GM10248 (cell line): ENCODE measurements at regions of chr11 and their contacts with region 1.

Region 1: GRCh38 chr11:123707606-123708205 is 33.8 kb downstream of the ZNF202 start:
- DNase-seq: peak; percentile 57
- CTCF ChIP-seq: peak; percentile 81

Region 2: GRCh38 chr11:123580557-123581275 is 127.0 kb before region 1 on chr11:
- CTCF ChIA-PET with region 1: interaction called, 56 read pairs
- POLR2A ChIA-PET with region 1: no interaction called
- DNase-seq: peak; percentile 88
- CTCF ChIP-seq: peak; percentile 97

Region 3: GRCh38 chr11:123640677-123641494 is 66.8 kb before region 1 on chr11:
- CTCF ChIA-PET with region 1: interaction called, 250 read pairs
- POLR2A ChIA-PET with region 1: no interaction called
- DNase-seq: peak; percentile 71
- CTCF ChIP-seq: peak; percentile 79

Region 4: DNA sequence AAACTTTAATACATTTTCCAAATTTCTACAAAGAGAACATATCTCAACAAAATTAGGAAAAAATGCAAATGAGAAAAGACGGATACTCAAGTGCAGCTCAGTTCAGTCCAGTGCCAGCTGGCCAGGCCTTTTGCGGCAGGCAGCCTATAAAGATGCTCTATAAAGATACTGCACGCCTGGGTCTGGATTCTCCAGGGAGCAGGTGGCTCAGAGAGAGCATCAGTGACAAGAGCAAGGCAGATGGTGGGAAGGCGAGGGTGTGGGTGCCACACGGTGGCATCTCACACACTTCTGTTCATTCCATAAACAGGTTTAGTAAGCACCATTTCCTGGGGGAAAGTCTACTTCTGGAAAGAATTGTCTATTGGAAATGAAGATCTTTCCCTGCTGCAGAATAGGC is 35.1 kb before region 1 on chr11:
- CTCF ChIA-PET with region 1: interaction called, 10 read pairs
- POLR2A ChIA-PET with region 1: no interaction called
- DNase-seq: no peak
- CTCF ChIP-seq: no peak

Region 5: DNA sequence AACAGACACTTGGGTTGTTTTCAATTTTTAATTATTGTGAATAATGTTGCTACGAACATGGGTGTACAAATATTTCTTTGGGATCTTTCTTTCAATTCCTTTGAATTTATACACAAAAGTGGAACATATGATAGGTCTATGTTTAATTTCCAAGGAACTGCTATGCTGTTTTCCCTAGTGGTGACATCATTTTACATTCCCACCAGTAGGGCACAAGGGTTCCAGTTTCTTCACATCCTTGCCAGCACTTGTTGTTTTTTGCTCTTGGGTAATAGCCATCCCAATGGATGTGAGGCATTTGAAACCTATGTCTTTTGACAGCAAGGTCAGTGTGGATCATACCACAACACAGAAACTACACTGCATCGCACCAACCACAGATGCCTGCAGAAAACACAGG is 11.5 kb before region 1 on chr11:
- CTCF ChIA-PET with region 1: interaction called, 21 read pairs
- POLR2A ChIA-PET with region 1: no interaction called
- DNase-seq: no peak
- CTCF ChIP-seq: no peak

Region 6: GRCh38 chr11:123729602-123730001 is 21.9 kb after region 1 on chr11:
- CTCF ChIA-PET with region 1: interaction called, 24 read pairs
- POLR2A ChIA-PET with region 1: no interaction called
- DNase-seq: no peak
- CTCF ChIP-seq: no peak

Region 7: DNA sequence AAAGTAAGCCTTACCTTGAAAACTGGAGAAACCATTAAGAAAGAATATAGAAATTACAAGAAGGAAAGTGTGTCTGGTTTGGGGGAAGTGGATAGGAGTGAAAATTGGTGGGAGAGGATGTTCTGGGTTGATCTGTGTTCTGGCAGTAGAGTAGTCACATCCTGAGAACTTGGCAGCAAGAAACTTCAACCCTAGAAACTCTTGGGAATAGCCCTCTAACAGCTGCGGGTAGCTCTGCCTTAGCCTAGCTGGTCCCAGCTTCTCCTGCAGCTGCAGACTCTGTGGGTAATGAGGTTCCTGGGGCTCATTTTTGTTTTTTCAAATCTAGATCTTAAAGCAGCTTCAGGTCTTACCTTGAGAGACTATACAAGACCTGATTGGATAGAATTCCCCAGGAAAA is 70.8 kb after region 1 on chr11:
- CTCF ChIA-PET with region 1: no interaction called
- POLR2A ChIA-PET with region 1: no interaction called
- DNase-seq: no peak
- CTCF ChIP-seq: no peak

Region 8: GRCh38 chr11:123815122-123815521 is 107.4 kb after region 1 on chr11:
- CTCF ChIA-PET with region 1: no interaction called
- POLR2A ChIA-PET with region 1: no interaction called
- DNase-seq: no peak
- CTCF ChIP-seq: no peak

Region 9: DNA sequence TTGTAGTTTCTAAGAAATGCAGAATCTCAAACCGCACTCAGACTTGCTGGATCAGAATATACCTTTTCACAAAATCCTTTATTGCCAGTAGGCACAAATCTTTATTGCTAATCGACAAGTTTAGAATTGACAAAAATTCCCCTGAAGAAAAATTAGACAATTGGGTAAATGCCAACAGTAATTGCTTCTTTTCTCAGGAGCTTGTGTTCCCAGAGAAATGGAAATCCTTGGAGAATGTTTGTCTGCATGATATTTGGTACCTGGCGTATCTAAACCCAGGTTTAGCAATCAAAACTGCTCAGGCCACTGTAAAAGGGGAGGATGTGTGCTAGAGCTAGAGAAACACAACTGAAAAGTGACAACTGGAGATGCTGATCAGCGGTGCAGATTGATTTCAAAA is 548.4 kb after region 1 on chr11 and contains the start of gene OR8G5:
- CTCF ChIA-PET with region 1: no interaction called
- POLR2A ChIA-PET with region 1: no interaction called
- DNase-seq: no peak
- CTCF ChIP-seq: no peak